CD8-positive, alpha-beta T cell (primary cell): ENCODE measurements at regions of chr6 and their contacts with region 1.

Region 1: DNA sequence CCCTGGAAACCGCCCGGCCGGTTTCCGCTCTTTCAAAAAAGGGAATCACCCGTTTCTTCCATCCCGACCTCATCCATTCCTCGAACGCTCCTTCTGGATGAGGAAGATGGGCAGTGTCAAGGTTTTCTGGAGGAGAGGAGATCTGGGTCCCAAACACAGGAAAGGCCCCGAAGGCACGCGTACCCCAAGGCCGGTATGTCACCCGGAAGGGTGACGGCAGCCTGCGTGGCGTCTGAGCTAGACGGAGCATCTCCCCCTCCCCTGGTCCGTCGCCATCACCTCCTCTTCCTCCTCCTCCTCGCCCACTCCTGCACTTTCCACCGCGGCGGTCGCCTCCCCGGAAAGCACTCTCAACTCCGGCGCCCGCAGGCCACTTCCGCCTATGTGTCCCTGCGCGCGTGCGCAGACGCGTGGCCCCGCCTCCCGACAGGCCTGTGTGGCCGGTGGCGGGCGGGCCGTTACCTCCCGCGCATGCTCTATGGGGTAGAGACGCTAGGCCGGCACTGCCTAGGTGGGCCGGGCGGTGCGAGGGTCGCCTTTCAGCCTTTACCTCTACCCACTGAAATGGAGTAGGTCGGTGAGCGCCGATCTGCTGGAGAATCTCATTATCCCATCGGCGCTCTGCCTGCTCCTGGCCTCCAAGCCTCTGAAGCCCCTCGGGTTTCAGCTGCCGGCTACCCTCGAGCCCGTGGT is at the start of gene SLC35B3:
- DNase-seq: peak; percentile 93 to 99 (median 97)
- ATAC-seq: peak; percentile 93
- H3K4me3 ChIP-seq: peak within 1 kb of the TSS; percentile 87 to 94
- H3K4me3 Mint-ChIP-seq: peak within 1 kb of the TSS; percentile 91
- H3K27ac ChIP-seq: peak within 1 kb of the TSS; percentile 89 to 90
- H3K27ac Mint-ChIP-seq: peak within 1 kb of the TSS; percentile 98
- H3K4me1 ChIP-seq: peaks cover 27% of the 10 kb centered on the region
- H3K4me1 Mint-ChIP-seq: peaks cover 49% of the 10 kb centered on the region
- H3K27me3 ChIP-seq: no peaks in the 10 kb centered on the region
- H3K27me3 Mint-ChIP-seq: no peaks in the 10 kb centered on the region
- CTCF ChIP-seq: no peak
- total RNA-seq, gene SLC35B3: 1.8 to 2.1 TPM

Region 2: GRCh38 chr6:7312616-7313504 is 1122.4 kb before region 1 on chr6 and contains the start of gene SSR1:
- CTCF ChIA-PET with region 1: no interaction called
- POLR2A ChIA-PET with region 1: no interaction called
- intact Hi-C with region 1: loop called in 1 of 2 experiments (anchors 2 kb)
- DNase-seq: peak; percentile 84 to 97 (median 93)
- ATAC-seq: peak; percentile 94
- H3K4me3 ChIP-seq: peak within 1 kb of the TSS; percentile 76 to 98
- H3K4me3 Mint-ChIP-seq: peak within 1 kb of the TSS; percentile 88
- H3K27ac ChIP-seq: peak within 1 kb of the TSS; percentile 71 to 84
- H3K27ac Mint-ChIP-seq: peak within 1 kb of the TSS; percentile 91
- H3K4me1 ChIP-seq: peaks cover 34% of the 10 kb centered on the region
- H3K4me1 Mint-ChIP-seq: peaks cover 53% of the 10 kb centered on the region
- H3K27me3 ChIP-seq: no peaks in the 10 kb centered on the region
- H3K27me3 Mint-ChIP-seq: no peaks in the 10 kb centered on the region
- CTCF ChIP-seq: no peak
- total RNA-seq, gene SSR1: 40.5 to 42.5 TPM

Region 3: DNA sequence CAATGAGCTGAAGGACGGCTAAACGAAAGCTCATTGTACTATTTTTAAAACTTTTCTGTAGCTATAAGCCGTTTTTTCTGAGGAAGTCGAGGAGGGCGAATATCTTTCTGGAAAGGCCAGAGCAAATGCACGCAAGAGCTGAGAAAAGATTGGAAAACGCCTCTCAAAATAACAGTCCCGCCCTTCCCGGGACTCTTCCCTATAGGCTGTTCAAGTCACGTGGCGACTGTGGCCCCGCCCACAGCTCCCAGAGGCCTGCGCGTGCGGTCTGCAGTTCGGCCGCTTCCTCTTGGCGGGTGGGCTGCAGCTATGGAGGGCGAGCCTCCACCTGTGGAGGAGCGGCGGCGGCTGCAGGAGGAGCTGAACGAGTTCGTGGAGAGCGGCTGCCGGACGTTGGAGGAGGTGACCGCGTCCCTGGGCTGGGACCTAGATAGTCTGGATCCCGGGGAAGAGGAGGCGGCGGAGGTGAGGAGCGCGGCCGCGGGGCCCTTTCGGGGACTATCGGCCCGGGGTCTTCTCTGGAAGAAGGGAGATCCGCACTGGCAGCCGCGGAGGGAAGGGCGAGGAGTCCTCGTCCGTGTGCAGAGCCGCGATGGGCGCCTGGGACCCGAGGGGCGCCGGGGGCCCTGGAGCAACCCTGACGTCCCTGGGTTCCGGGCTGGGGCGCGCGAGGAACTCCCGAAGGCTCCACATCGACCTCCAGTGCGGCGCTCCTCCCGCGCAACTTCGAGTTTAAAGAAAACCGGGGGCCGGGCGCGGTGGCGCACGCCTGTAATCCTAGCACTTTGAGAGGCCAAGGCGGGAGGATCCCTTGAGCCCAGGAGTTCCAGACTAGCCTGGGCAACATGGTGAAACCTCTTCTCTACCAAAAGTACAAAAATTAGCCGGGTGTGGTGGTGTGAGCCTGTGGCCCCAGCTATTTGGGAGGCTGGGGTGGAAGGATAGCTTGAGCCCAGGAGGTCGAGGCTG is 845.1 kb before region 1 on chr6 and contains the start of gene SNRNP48:
- CTCF ChIA-PET with region 1: no interaction called
- POLR2A ChIA-PET with region 1: no interaction called
- intact Hi-C with region 1: loop called (anchors 1 to 10 kb)
- DNase-seq: peak; percentile 80 to 94 (median 90)
- ATAC-seq: peak; percentile 97
- H3K4me3 ChIP-seq: peak within 1 kb of the TSS; percentile 76 to 92
- H3K4me3 Mint-ChIP-seq: peak within 1 kb of the TSS; percentile 100
- H3K27ac ChIP-seq: peak within 1 kb of the TSS; percentile 58 to 61
- H3K27ac Mint-ChIP-seq: peak within 1 kb of the TSS; percentile 95
- H3K4me1 ChIP-seq: peaks cover 25% of the 10 kb centered on the region
- H3K4me1 Mint-ChIP-seq: peaks cover 47% of the 10 kb centered on the region
- H3K27me3 ChIP-seq: no peaks in the 10 kb centered on the region
- H3K27me3 Mint-ChIP-seq: no peaks in the 10 kb centered on the region
- CTCF ChIP-seq: no peak
- total RNA-seq, gene SNRNP48: 12.2 to 12.9 TPM

Region 4: GRCh38 chr6:8063761-8064637 is 371.3 kb before region 1 on chr6 and contains the start of gene BLOC1S5:
- CTCF ChIA-PET with region 1: no interaction called
- POLR2A ChIA-PET with region 1: interaction called, 3 read pairs
- intact Hi-C with region 1: loop called (anchors 1 kb)
- DNase-seq: peak; percentile 91 to 98 (median 95)
- ATAC-seq: peak; percentile 92
- H3K4me3 ChIP-seq: peak within 1 kb of the TSS; percentile 82 to 89
- H3K4me3 Mint-ChIP-seq: peak within 1 kb of the TSS; percentile 95
- H3K27ac ChIP-seq: peak within 1 kb of the TSS; percentile 84 to 87
- H3K27ac Mint-ChIP-seq: peak within 1 kb of the TSS; percentile 98
- H3K4me1 ChIP-seq: peaks cover 13% of the 10 kb centered on the region
- H3K4me1 Mint-ChIP-seq: peaks cover 27% of the 10 kb centered on the region
- H3K27me3 ChIP-seq: no peaks in the 10 kb centered on the region
- H3K27me3 Mint-ChIP-seq: peaks cover 2% of the 10 kb centered on the region
- CTCF ChIP-seq: no peak
- total RNA-seq, gene BLOC1S5: 6.3 to 8.9 TPM

Region 5: GRCh38 chr6:10404107-10404798 is 1968.9 kb after region 1 on chr6:
- CTCF ChIA-PET with region 1: no interaction called
- POLR2A ChIA-PET with region 1: no interaction called
- intact Hi-C with region 1: loop called in 1 of 2 experiments (anchors 10 kb)
- DNase-seq: peak; percentile 50 to 91 (median 77)
- ATAC-seq: peak; percentile 87
- H3K4me3 ChIP-seq: peak overlapping the region; percentile 55 to 71
- H3K4me3 Mint-ChIP-seq: peak overlapping the region; percentile 73
- H3K27ac ChIP-seq: peak overlapping the region in 1 of 2 experiments; percentile 56
- H3K27ac Mint-ChIP-seq: peak overlapping the region; percentile 75
- H3K4me1 ChIP-seq: peaks cover 13% of the 10 kb centered on the region
- H3K4me1 Mint-ChIP-seq: peaks cover 15% of the 10 kb centered on the region
- H3K27me3 ChIP-seq: peaks cover 5 to 11% of the 10 kb centered on the region in 2 experiments
- H3K27me3 Mint-ChIP-seq: peaks cover 47% of the 10 kb centered on the region
- CTCF ChIP-seq: no peak